PC-3 (cell line): ENCODE measurements at regions of chr6 and their contacts with region 1.

Region 1: DNA sequence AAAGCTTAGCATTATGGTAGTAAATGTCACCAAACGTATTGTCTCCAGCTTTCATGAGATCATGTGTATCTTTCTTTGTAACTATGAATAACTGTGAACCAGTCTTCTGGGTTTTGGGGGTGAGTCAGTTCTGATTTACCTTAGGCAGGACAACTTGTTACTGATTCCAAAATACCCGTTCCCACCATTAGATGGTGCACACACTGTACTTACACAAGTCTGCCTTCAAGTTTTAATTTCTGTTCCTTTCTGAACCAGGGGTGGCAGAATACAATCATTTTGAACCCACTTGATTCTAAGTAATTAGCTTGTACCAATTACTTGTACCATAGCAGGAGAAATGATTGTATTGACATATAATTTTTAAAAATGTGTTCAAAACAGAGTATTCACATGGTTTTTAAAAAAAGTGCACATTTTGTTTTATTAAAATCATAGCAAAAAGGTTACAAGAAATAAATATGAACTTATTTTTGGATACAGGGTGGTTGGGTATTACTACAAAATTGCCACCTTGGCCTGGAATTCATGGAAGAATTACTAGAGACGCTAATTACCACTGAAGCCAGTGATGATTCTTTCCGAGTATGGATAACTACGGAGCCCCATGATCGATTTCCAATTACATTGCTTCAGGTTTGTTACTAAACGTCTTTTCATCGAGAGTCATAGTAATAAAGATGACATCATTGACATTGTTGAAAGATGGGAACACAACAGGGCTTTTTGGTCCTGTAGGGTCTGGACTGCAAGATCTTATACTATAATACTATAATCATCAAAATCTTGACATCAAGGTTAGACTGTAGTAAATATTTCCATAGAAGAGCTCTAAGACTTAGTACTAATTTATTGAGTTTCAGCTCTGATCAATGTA is 75.2 kb upstream of the GLP1R start:
- DNase-seq: peak; percentile 87
- ATAC-seq: peak; percentile 92
- H3K4me3 ChIP-seq: no peak overlapping the region
- H3K27ac ChIP-seq: no peak overlapping the region
- H3K4me1 ChIP-seq: peaks cover 17% of the 10 kb centered on the region
- H3K27me3 ChIP-seq: peaks cover 35% of the 10 kb centered on the region
- CTCF ChIP-seq: peak; percentile 89

Region 2: GRCh38 chr6:38531134-38531533 is 442.3 kb before region 1 on chr6:
- CTCF ChIA-PET with region 1: no interaction called
- POLR2A ChIA-PET with region 1: no interaction called
- intact Hi-C with region 1: no loop called
- DNase-seq: no peak
- ATAC-seq: no peak
- H3K4me3 ChIP-seq: no peak overlapping the region
- H3K27ac ChIP-seq: no peak overlapping the region
- H3K4me1 ChIP-seq: no peaks in the 10 kb centered on the region
- H3K27me3 ChIP-seq: no peaks in the 10 kb centered on the region
- CTCF ChIP-seq: no peak

Region 3: GRCh38 chr6:39029156-39030011 is 56.0 kb after region 1 on chr6:
- CTCF ChIA-PET with region 1: no interaction called
- POLR2A ChIA-PET with region 1: no interaction called
- intact Hi-C with region 1: no loop called
- DNase-seq: peak; percentile 49
- ATAC-seq: peak; percentile 83
- H3K4me3 ChIP-seq: no peak overlapping the region
- H3K27ac ChIP-seq: no peak overlapping the region
- H3K4me1 ChIP-seq: no peaks in the 10 kb centered on the region
- H3K27me3 ChIP-seq: peaks cover 89% of the 10 kb centered on the region
- CTCF ChIP-seq: peak; percentile 87

Region 4: GRCh38 chr6:39166189-39166911 is 192.9 kb after region 1 on chr6:
- CTCF ChIA-PET with region 1: no interaction called
- POLR2A ChIA-PET with region 1: no interaction called
- intact Hi-C with region 1: loop called (anchors 5 kb)
- DNase-seq: peak; percentile 85
- ATAC-seq: peak; percentile 78
- H3K4me3 ChIP-seq: no peak overlapping the region
- H3K27ac ChIP-seq: no peak overlapping the region
- H3K4me1 ChIP-seq: peaks cover 26% of the 10 kb centered on the region
- H3K27me3 ChIP-seq: peaks cover 22% of the 10 kb centered on the region; the same call in 1 of the 2 replicates
- CTCF ChIP-seq: peak; percentile 93

Region 5: DNA sequence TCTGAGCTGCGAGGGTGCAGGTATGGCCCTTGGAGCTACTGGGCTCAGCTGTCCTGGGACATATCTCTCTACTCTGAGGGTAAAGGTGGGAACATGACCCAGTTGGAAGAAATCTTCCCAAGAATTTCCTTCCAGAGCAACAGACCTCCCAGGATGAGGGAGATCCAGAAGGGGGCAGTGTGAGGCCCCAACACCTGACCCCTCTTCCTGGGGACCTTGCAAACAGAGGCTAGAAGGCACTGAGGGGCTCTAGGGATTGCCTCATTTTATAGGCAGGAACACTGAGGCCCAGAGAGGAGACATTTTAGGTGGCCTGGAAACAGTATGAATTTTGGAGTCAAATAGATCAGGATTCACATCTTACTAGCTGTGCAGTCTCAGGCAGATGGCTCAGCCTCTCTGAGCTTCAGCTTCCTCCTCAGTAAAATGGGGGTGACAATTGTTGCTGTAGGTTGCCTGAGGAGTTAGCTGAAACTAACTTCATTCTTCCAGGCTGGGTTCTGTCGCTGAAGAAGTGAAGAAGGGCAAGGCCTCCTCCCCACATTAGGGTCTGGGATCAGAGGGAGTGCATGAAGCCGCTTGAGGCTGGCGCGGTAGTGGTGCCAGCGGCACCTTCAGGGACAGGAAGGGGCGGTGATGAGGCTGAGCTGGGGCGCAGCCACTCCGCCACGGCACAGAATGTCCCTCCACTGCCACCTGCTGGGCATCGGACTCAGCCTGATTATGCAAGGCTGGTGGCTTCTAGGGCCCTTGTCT is 329.4 kb after region 1 on chr6:
- CTCF ChIA-PET with region 1: interaction called, 7 read pairs
- POLR2A ChIA-PET with region 1: no interaction called
- intact Hi-C with region 1: loop called (anchors 1 kb)
- DNase-seq: peak; percentile 86
- ATAC-seq: peak; percentile 98
- H3K4me3 ChIP-seq: no peak overlapping the region
- H3K27ac ChIP-seq: no peak overlapping the region
- H3K4me1 ChIP-seq: 0 out of 2 replicates have a peak, but pooled peaks cover 2% of the 10 kb centered on the region
- H3K27me3 ChIP-seq: peaks cover 24% of the 10 kb centered on the region
- CTCF ChIP-seq: peak; percentile 89

Region 6: GRCh38 chr6:39309942-39310531 is 336.6 kb after region 1 on chr6:
- CTCF ChIA-PET with region 1: interaction called, 3 read pairs
- POLR2A ChIA-PET with region 1: no interaction called
- intact Hi-C with region 1: loop called (anchors 1 kb)
- DNase-seq: peak; percentile 86
- ATAC-seq: peak; percentile 96
- H3K4me3 ChIP-seq: no peak overlapping the region
- H3K27ac ChIP-seq: no peak overlapping the region
- H3K4me1 ChIP-seq: no peaks in the 10 kb centered on the region
- H3K27me3 ChIP-seq: peaks cover 20% of the 10 kb centered on the region
- CTCF ChIP-seq: peak; percentile 93